ENCODE measurements at regions of chr11 and their contacts with region 1.

Region 1: DNA sequence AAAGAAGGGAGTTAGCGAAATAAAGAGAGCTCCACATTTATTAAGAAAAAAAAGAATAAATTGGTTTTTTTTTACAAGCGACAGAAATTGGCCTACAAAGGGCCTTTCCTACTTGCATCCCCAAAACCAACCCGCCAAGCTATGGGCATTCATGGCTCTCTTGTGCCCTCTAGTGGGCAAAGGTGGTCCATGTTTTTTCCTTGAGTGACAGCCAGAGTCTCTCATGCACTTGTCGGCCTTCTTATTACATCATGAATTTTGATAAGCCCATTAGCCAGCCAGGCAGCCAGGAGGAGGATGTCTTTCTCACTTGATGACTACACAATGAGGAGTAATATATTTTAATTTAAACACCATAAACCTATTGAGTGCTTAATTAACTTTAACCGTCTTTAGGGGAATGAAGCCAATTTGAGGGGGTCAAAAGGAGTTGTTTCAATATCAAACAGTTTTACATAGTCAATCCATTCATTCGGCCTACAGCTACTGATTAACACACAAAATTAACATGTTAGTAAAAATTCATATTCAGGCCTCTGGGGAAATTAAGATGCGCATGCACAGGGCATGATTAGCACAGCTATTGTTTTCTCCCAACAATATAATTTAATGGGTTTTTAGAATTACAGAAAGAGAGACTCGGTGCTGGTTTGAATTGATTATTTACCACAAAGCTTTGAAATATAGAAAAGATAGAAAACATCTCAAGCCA is 85.5 kb downstream of the RCN1 start:
- DNase-seq: peak; percentile 29 to 87 (median 66)
- ATAC-seq: peak; percentile 60 to 74 (median 68)
- H3K4me3 ChIP-seq: no peak overlapping the region
- H3K4me3 Mint-ChIP-seq: no peak overlapping the region
- H3K27ac ChIP-seq: no peak overlapping the region
- H3K27ac Mint-ChIP-seq: no peak overlapping the region
- H3K4me1 ChIP-seq: peaks cover 0 to 3% of the 10 kb centered on the region in 2 experiments
- H3K4me1 Mint-ChIP-seq: peaks cover 0 to 7% (median 4%) of the 10 kb centered on the region in 3 donors
- H3K27me3 ChIP-seq: peaks cover 0 to 7% of the 10 kb centered on the region in 2 experiments
- H3K27me3 Mint-ChIP-seq: peaks cover 4 to 16% of the 10 kb centered on the region in 2 donors

Region 2: DNA sequence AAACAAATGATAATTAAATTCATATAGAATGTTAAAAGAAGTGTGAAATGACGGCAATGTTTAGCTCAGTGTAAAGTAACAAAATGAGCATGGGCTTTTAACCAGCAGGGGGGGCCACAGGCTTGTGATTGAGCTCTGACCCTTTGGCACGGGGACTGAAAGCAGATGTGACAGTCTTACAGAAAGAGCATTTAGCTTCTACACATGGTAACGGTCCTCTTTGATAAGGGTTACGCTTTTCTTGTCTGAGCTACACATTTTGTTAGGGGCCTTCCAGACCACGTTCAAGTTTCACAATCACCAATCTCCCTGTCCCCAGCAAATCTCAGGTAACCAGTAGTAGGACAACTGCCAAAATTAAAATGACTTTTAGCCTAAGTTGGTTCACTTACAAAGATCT is 1069.3 kb before region 1 on chr11:
- CTCF ChIA-PET with region 1: interaction called in 1 of 2 experiments, 10 read pairs
- POLR2A ChIA-PET with region 1: no interaction called
- DNase-seq: peak in 21 of 35 experiments; percentile 0 to 47 (median 9)
- ATAC-seq: no peak
- H3K4me3 ChIP-seq: no peak overlapping the region
- H3K4me3 Mint-ChIP-seq: no peak overlapping the region
- H3K27ac ChIP-seq: no peak overlapping the region
- H3K27ac Mint-ChIP-seq: no peak overlapping the region
- H3K4me1 ChIP-seq: no peaks in the 10 kb centered on the region
- H3K4me1 Mint-ChIP-seq: no peaks in the 10 kb centered on the region
- H3K27me3 ChIP-seq: no peaks in the 10 kb centered on the region
- H3K27me3 Mint-ChIP-seq: no peaks in the 10 kb centered on the region

Region 3: DNA sequence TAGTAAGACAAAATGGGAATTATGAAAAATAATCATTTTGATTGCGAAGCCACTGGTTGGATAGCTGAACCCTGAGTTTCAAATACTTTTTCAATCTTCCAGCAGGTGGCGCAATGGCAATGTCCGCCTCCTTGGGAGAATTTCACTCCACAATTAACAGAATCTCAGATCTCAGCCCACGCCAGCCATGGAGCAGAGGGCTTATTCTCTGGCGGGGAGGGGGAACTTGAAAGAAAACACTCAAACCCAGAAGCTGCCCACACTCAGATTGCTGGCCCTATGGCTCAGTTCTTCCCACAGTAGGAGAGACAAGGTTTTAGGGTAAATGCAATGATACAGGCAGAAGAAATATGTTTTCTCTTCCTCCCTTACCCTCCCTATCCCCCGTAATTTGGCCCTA is 124.2 kb before region 1 on chr11:
- CTCF ChIA-PET with region 1: interaction called, 73 to 77 read pairs
- POLR2A ChIA-PET with region 1: no interaction called
- DNase-seq: peak in 30 of 35 experiments; percentile 2 to 73 (median 33)
- ATAC-seq: peak in 1 of 4 experiments; percentile 36
- H3K4me3 ChIP-seq: no peak overlapping the region
- H3K4me3 Mint-ChIP-seq: no peak overlapping the region
- H3K27ac ChIP-seq: no peak overlapping the region
- H3K27ac Mint-ChIP-seq: no peak overlapping the region
- H3K4me1 ChIP-seq: peaks cover 0 to 3% of the 10 kb centered on the region in 2 experiments
- H3K4me1 Mint-ChIP-seq: no peaks in the 10 kb centered on the region
- H3K27me3 ChIP-seq: peaks cover 0 to 8% of the 10 kb centered on the region in 2 experiments
- H3K27me3 Mint-ChIP-seq: peaks cover 34 to 42% of the 10 kb centered on the region in 2 donors

Region 4: DNA sequence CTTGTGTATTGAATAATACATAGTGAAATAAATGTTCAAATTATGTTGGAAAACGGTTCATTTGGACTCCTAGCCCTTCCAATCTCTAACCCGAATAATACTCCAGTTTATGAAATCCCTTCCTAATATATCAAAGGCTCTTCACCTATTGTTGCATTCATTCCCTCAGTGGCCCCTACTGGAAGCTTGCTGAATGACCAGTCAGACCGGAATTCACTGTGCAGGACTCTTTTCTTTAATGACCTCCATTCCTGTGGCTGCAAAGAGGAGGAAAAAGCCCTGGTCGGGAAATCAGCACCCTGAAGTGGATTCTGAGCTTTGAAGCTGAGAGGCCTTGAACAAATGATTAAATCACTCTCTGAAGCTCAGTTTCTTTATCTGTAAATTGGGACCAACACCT is 104.6 kb before region 1 on chr11:
- CTCF ChIA-PET with region 1: no interaction called
- POLR2A ChIA-PET with region 1: no interaction called
- DNase-seq: no peak
- ATAC-seq: no peak
- H3K4me3 ChIP-seq: no peak overlapping the region
- H3K4me3 Mint-ChIP-seq: no peak overlapping the region
- H3K27ac ChIP-seq: no peak overlapping the region
- H3K27ac Mint-ChIP-seq: no peak overlapping the region
- H3K4me1 ChIP-seq: no peaks in the 10 kb centered on the region
- H3K4me1 Mint-ChIP-seq: no peaks in the 10 kb centered on the region
- H3K27me3 ChIP-seq: peaks cover 0 to 19% of the 10 kb centered on the region in 2 experiments
- H3K27me3 Mint-ChIP-seq: peaks cover 21 to 45% of the 10 kb centered on the region in 2 donors

Measured in T-cell (primary cell).